Endothelial cell of umbilical vein (primary cell): ENCODE measurements at regions of chr7 and their contacts with region 1.

Region 1: GRCh38 chr7:101363734-101364374 is 1.2 kb downstream of the COL26A1 start:
- DNase-seq: peak; percentile 38
- H3K4me3 ChIP-seq: peak overlapping the region in 1 of 3 experiments; percentile 34
- H3K27ac ChIP-seq: no peak overlapping the region
- H3K4me1 ChIP-seq: peaks cover 3% of the 10 kb centered on the region
- H3K27me3 ChIP-seq: peaks cover 10 to 24% of the 10 kb centered on the region in 2 experiments
- CTCF ChIP-seq: peak; percentile 77 to 91
- POLR2A ChIP-seq: no peak

Region 2: GRCh38 chr7:101373812-101374614 is 10.2 kb after region 1 on chr7:
- CTCF ChIA-PET with region 1: interaction called, 20 read pairs
- POLR2A ChIA-PET with region 1: no interaction called
- dilution Hi-C with region 1: no loop called
- intact Hi-C with region 1: no loop called
- DNase-seq: no peak
- H3K4me3 ChIP-seq: no peak overlapping the region
- H3K27ac ChIP-seq: no peak overlapping the region
- H3K4me1 ChIP-seq: no peaks in the 10 kb centered on the region
- H3K27me3 ChIP-seq: peaks cover 7 to 8% of the 10 kb centered on the region in 2 experiments
- CTCF ChIP-seq: no peak
- POLR2A ChIP-seq: no peak

Region 3: DNA sequence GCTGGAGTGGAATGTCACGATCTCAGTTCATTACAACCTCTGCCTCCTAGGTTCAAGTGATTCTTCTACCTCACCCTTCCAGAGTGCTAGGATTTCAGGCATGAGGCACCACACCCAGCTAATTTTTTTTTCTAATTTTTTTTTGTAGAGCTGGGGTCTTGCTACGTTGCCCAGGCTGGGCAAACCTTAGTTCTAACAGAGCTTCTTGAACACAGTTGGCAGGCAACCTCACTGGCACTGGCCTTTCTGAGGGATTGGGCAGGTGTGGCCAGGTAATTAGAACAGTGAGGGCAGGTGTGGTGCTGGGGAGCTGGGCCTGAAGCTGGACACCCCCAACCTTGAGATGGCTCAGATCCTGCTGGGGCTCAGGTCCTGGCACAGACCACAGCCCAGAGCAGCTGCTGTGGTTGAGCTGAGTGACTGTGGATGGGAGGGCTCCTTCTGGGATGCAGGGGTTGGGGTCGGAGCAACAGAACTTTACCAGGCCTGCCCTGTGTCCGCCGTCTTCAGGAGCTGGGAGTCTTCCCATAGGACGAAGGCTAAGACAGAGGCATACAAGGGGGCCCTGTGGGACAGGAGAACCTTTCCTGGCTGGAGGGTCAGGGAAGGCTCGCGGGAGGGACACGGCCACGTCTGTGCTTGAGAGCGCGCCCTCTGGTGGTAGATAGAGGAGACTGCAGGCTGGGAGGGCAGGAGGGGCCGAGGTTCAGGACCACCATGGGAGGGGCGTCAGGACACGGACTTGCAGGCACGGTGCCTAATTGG is 47.1 kb after region 1 on chr7:
- CTCF ChIA-PET with region 1: interaction called, 33 read pairs
- POLR2A ChIA-PET with region 1: no interaction called
- dilution Hi-C with region 1: no loop called
- intact Hi-C with region 1: loop called (anchors 1 kb)
- DNase-seq: peak; percentile 30
- H3K4me3 ChIP-seq: no peak overlapping the region
- H3K27ac ChIP-seq: no peak overlapping the region
- H3K4me1 ChIP-seq: no peaks in the 10 kb centered on the region
- H3K27me3 ChIP-seq: no peaks in the 10 kb centered on the region
- CTCF ChIP-seq: peak; percentile 82 to 91
- POLR2A ChIP-seq: no peak

Region 4: DNA sequence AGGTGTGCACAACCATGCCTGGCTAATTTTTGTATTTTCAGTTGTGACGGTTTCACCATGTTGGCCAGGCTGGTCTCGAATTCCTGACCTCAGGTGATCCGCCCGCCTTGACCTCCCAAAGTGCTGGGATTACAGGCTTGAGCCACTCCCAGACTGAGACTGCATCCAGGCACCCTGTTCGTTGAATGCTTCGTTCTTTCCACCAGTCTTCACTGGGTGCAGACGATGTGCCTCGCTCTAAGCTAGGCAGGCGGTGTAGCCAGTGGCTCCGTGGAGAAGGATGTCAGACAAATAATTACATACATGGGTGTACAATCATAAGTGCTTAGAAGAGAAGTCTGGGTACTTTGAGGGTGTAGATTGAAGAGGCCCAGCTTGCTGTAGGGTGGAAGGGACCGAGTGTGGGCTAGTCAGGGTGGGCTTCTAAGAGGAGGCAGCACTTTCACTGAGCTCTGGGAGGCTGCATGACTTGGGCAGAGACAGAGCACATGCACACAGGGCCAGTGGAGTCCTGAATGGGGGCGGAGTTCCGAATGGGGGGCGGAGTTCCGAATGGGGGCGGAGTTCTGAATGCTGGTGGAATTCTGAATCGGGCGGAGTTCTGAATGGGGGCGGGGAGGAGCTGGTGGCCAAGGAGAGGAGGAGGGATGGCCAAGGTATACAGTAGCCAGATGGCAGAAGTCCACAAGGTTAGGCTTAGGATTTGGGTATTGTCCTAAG is 73.2 kb after region 1 on chr7:
- CTCF ChIA-PET with region 1: interaction called, 28 read pairs
- POLR2A ChIA-PET with region 1: no interaction called
- dilution Hi-C with region 1: no loop called
- intact Hi-C with region 1: loop called (anchors 1 kb)
- DNase-seq: no peak
- H3K4me3 ChIP-seq: no peak overlapping the region
- H3K27ac ChIP-seq: no peak overlapping the region
- H3K4me1 ChIP-seq: no peaks in the 10 kb centered on the region
- H3K27me3 ChIP-seq: peaks cover 0 to 2% of the 10 kb centered on the region in 2 experiments
- CTCF ChIP-seq: no peak
- POLR2A ChIP-seq: no peak

Region 5: GRCh38 chr7:101507791-101508252 is 144.0 kb after region 1 on chr7:
- CTCF ChIA-PET with region 1: interaction called, 12 read pairs
- POLR2A ChIA-PET with region 1: no interaction called
- dilution Hi-C with region 1: no loop called
- intact Hi-C with region 1: no loop called
- DNase-seq: peak; percentile 58
- H3K4me3 ChIP-seq: no peak overlapping the region
- H3K27ac ChIP-seq: no peak overlapping the region
- H3K4me1 ChIP-seq: no peaks in the 10 kb centered on the region
- H3K27me3 ChIP-seq: peaks cover 0 to 1% of the 10 kb centered on the region in 2 experiments
- CTCF ChIP-seq: peak; percentile 61 to 71
- POLR2A ChIP-seq: no peak

Region 6: DNA sequence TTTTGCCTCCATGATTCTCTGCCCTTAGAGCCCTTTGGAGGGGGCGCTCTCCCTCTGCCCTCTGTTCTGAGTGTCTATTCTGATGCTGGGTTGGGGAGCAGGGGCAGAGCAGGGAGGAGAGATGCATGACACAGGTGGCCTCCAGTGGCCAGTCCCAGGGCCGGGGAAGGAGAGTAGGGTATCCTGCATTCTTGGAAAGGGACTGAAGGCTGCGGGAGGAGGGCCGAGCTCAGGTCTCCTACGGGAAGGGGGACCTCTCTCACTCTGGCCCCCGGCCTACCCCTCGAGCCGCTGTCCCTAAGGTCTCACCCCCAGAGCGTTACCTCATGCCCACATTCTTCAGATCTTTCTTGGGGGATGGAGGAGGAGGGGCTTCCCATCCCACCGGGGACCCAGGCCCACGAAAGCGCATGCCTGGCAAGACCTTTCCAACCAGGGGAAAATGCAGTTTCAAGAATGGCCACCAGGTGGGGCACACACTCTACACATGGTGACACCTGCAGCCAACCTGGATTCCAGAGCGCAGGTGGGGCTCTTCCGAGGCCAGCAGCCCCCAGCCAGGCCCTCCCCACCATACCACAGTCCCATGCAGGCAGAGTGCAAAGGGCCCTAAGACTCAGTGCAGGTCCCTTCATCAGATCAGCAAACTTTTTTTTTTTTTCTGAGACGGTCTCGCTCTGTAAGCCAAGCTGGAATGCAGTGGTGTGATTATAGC is 178.8 kb after region 1 on chr7:
- CTCF ChIA-PET with region 1: interaction called, 3 read pairs
- POLR2A ChIA-PET with region 1: no interaction called
- dilution Hi-C with region 1: no loop called
- intact Hi-C with region 1: loop called (anchors 1 kb)
- DNase-seq: peak; percentile 48
- H3K4me3 ChIP-seq: no peak overlapping the region
- H3K27ac ChIP-seq: no peak overlapping the region
- H3K4me1 ChIP-seq: no peaks in the 10 kb centered on the region
- H3K27me3 ChIP-seq: no peaks in the 10 kb centered on the region
- CTCF ChIP-seq: peak; percentile 58 to 84
- POLR2A ChIP-seq: no peak